Vagina (tissue), 2 donors: ENCODE measurements at regions of chr7 and their contacts with region 1.

Region 1: GRCh38 chr7:73894733-73895551 is 34.0 kb downstream of the TMEM270 start:
- DNase-seq: peak in 1 of 2 donors; percentile 97
- H3K4me3 ChIP-seq: no peak overlapping the region
- H3K27ac ChIP-seq: peak overlapping the region; percentile 62
- H3K4me1 ChIP-seq: peaks cover 55% of the 10 kb centered on the region
- H3K27me3 ChIP-seq: no peaks in the 10 kb centered on the region
- CTCF ChIP-seq: no peak
- POLR2A ChIP-seq: no peak

Region 2: GRCh38 chr7:74032191-74032490 is 137.2 kb after region 1 on chr7:
- intact Hi-C with region 1: loop called (anchors 2 kb)
- DNase-seq: no peak
- H3K4me3 ChIP-seq: no peak overlapping the region
- H3K27ac ChIP-seq: peak overlapping the region; percentile 91
- H3K4me1 ChIP-seq: peaks cover 77% of the 10 kb centered on the region
- H3K27me3 ChIP-seq: no peaks in the 10 kb centered on the region
- CTCF ChIP-seq: no peak
- POLR2A ChIP-seq: no peak